Breast epithelium (tissue), 4 donors: ENCODE measurements at regions of chr14 and their contacts with region 1.

Region 1: GRCh38 chr14:92451755-92452154 is 61.8 kb upstream of the RIN3 start:
- DNase-seq: no peak
- H3K4me3 ChIP-seq: no peak overlapping the region
- H3K27ac ChIP-seq: peak overlapping the region in 1 of 2 donors; percentile 32
- H3K4me1 ChIP-seq: no peaks in the 10 kb centered on the region
- H3K27me3 ChIP-seq: no peaks in the 10 kb centered on the region
- CTCF ChIP-seq: no peak
- POLR2A ChIP-seq: no peak

Region 2: DNA sequence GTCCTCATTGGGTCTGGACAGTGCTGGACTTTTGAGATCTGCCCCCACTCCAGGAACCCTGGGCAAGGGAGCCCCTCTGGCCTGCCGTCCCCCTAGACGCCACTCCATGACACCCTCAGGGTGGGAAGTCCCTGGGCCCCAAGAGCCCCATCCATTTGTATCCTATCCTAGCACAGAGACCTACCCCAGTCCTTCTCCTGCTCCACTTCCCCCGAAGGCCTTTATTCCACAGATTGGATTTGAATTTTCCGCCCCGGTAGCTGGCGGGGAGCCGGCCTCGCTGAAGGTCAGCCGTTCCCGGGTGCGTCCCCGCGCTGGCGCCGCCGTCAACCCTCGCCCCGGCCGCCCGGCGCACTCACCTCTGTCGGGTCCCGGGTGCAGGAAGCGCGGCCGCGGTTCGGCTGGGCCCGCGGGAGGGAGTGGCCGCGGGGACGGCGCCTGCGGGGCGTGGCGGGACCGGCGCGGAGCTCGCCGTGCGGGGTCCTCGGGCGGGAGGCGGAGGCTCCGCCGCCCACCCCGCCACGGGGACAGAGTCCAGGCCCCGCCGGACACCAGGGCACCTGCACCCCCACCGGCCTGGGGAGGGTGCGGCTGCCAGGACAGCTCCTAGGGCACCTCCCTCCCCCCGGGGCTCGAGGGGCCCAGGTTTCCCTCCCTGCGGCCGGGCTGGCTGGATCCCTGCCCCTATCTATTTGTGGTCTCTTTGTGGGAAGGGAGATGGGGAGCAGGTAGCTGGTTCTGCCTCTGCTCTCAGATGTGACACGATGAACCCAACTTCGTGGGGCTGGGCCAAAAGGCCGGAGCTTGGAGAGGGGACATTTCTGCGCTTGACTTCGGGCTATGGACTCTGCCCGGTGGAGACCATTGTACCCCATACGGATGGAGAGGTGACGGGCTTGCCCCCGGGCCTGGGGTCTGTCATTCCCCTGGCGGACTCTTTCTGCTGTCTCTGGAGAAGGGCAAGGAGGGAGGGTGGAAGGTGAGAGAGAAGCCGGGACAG is 1187.3 kb before region 1 on chr14:
- intact Hi-C with region 1: no loop called
- DNase-seq: no peak
- H3K4me3 ChIP-seq: peak overlapping the region; percentile 35 to 68 (median 44)
- H3K27ac ChIP-seq: no peak overlapping the region
- H3K4me1 ChIP-seq: peaks cover 0 to 3% of the 10 kb centered on the region in 2 donors
- H3K27me3 ChIP-seq: peaks cover 0 to 4% of the 10 kb centered on the region in 2 donors
- CTCF ChIP-seq: no peak
- POLR2A ChIP-seq: no peak

Region 3: GRCh38 chr14:91953170-91953985 is 498.4 kb before region 1 on chr14:
- intact Hi-C with region 1: no loop called
- DNase-seq: no peak
- H3K4me3 ChIP-seq: no peak overlapping the region
- H3K27ac ChIP-seq: no peak overlapping the region
- H3K4me1 ChIP-seq: no peaks in the 10 kb centered on the region
- H3K27me3 ChIP-seq: no peaks in the 10 kb centered on the region
- CTCF ChIP-seq: no peak
- POLR2A ChIP-seq: no peak

Region 4: GRCh38 chr14:92382677-92383076 is 69.1 kb before region 1 on chr14:
- intact Hi-C with region 1: loop called (anchors 2 kb)
- DNase-seq: no peak
- H3K4me3 ChIP-seq: no peak overlapping the region
- H3K27ac ChIP-seq: no peak overlapping the region
- H3K4me1 ChIP-seq: no peaks in the 10 kb centered on the region
- H3K27me3 ChIP-seq: no peaks in the 10 kb centered on the region
- CTCF ChIP-seq: no peak
- POLR2A ChIP-seq: no peak

Region 5: DNA sequence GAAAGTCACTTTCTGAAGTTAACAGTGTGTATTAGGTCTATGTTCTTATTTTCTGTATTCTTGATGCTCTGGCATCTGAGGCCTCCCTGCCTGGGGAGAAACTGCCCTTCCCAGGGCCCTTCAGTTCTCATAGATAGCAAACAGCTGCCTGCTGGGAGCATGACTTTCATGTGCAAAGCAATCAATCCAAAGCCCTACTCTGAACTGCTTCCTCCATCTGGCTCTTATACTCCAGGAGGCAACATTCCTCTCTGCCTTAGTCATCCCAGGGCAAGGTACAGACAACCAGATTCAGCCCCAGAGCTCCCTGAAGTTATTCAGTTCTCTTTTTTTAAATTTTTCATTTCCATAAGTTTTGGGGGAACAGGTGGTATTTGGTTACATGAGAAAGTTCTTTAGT is 20.2 kb after region 1 on chr14:
- intact Hi-C with region 1: loop called (anchors 1 kb)
- DNase-seq: no peak
- H3K4me3 ChIP-seq: no peak overlapping the region
- H3K27ac ChIP-seq: no peak overlapping the region
- H3K4me1 ChIP-seq: peaks cover 0 to 9% of the 10 kb centered on the region in 2 donors
- H3K27me3 ChIP-seq: no peaks in the 10 kb centered on the region
- CTCF ChIP-seq: no peak
- POLR2A ChIP-seq: no peak